H1 (cell line): ENCODE measurements at regions of chr9 and their contacts with region 1.

Region 1: DNA sequence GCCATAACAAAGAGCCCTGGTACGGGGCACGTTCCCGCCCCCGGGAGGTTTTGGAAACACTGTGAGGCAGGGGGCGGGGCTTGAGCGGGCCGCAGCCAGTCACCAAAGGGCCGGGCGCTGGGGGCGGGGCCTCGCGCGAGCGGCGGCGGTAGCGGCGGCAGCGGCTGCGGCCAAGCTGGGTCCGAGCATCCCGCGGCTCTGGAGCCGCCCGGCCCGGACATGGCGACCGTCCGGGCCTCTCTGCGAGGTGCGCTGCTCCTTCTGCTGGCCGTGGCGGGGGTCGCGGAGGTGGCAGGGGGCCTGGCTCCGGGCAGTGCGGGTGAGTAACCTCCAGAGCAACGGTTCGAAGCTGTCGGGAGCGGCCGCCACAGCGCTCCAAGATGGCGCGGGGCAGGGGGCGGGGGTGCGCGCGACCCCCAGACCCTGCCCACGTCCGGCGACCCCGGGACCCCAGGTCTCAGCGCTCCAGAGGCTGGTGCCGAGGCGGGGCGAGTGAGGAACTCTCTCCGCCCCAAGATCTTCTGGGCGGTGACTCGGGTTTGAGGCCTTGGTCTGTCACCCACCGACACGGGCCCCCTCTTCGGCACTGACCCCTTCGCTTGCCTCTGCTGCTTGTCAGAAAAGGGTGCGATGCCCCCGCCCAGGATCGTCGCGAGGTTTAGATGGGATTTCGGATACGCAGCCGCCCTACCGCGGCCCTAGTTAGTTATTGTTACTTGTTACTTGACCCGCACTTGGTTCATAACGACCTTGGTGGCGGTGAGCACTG is at the start of gene RECK:
- DNase-seq: peak; percentile 65 to 98
- H3K4me3 ChIP-seq: peak within 1 kb of the TSS; percentile 78 to 93 (median 84)
- H3K27ac ChIP-seq: peak within 1 kb of the TSS; percentile 82
- H3K4me1 ChIP-seq: peaks cover 0 to 4% (median 0%) of the 10 kb centered on the region in 4 experiments; a peak in 3 of 7 replicates
- H3K27me3 ChIP-seq: no peaks in the 10 kb centered on the region
- CTCF ChIP-seq: no peak
- EP300 ChIP-seq: no peak
- POLR2A ChIP-seq: peak; percentile 38 to 89
- RAD21 ChIP-seq: no peak
- total RNA-seq, gene RECK: 9.8 and 10.0 TPM in 2 replicates

Region 2: GRCh38 chr9:35996358-35996975 is 40.5 kb before region 1 on chr9:
- CTCF ChIA-PET with region 1: no interaction called
- POLR2A ChIA-PET with region 1: no interaction called
- DNase-seq: peak in 1 of 2 experiments; percentile 17
- H3K4me3 ChIP-seq: no peak overlapping the region
- H3K27ac ChIP-seq: no peak overlapping the region
- H3K4me1 ChIP-seq: peaks cover 0 to 4% (median 0%) of the 10 kb centered on the region in 4 experiments; a peak in 1 of 7 replicates
- H3K27me3 ChIP-seq: no peaks in the 10 kb centered on the region
- CTCF ChIP-seq: no peak
- EP300 ChIP-seq: no peak
- POLR2A ChIP-seq: no peak
- RAD21 ChIP-seq: no peak

Region 3: GRCh38 chr9:36023260-36024048 is 13.5 kb before region 1 on chr9:
- CTCF ChIA-PET with region 1: interaction called, 19 read pairs
- POLR2A ChIA-PET with region 1: interaction called, 5 read pairs
- DNase-seq: peak in 1 of 2 experiments; percentile 83
- H3K4me3 ChIP-seq: no peak overlapping the region
- H3K27ac ChIP-seq: no peak overlapping the region
- H3K4me1 ChIP-seq: no peaks in the 10 kb centered on the region
- H3K27me3 ChIP-seq: no peaks in the 10 kb centered on the region
- CTCF ChIP-seq: peak; percentile 74 to 95 (median 95)
- EP300 ChIP-seq: no peak
- POLR2A ChIP-seq: no peak
- RAD21 ChIP-seq: peak; percentile 84 to 90

Region 4: DNA sequence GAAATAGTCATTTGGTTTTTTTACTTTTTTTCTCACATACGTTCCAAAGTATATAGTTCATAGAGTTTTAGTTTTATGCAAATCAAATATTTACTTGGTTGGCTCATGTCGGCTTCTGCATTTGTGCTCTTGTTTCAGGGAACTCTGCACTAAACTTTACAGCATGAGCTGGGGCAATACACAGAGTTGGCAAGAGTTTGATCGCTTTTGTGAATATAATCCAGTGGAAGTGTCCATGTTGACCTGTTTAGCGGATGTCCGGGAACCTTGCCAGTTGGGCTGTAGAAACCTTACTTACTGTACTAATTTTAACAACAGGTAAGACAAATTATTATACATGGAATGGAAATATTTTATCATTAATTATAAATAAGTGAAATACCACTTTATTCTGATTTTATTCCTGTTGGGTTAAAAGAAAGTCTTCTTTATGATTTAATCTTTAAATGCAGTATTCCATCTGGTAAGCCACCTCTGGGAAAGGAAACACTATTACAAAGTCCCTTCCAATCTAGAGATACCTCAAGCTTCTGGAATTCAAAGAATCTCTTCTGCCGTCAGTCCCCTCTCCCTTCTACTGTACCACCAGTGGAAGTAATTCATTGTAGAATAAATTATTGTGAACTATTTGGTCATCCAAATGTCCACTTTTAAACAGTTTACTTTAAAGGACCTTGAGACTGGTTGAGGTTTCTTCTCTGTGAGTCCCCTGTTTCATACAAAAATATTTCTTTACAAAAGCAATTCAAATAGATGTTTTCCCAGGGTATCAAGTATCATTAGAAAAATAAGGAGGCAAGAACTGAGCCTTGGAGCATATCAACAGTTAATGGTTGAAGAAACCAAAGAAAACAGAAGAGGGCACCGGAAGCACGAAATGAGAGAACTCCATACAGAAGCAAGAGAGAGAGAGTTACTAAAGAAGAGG is 54.3 kb after region 1 on chr9:
- CTCF ChIA-PET with region 1: no interaction called
- POLR2A ChIA-PET with region 1: no interaction called
- DNase-seq: no peak
- H3K4me3 ChIP-seq: no peak overlapping the region
- H3K27ac ChIP-seq: no peak overlapping the region
- H3K4me1 ChIP-seq: peaks cover 0 to 6% (median 4%) of the 10 kb centered on the region in 4 experiments; a peak in 4 of 7 replicates
- H3K27me3 ChIP-seq: no peaks in the 10 kb centered on the region
- CTCF ChIP-seq: no peak; a peak in 1 of 4 replicates
- EP300 ChIP-seq: no peak
- POLR2A ChIP-seq: no peak
- RAD21 ChIP-seq: peak; percentile 35 to 42